ENCODE measurements at regions of chr19 and their contacts with region 1.

Region 1: GRCh38 chr19:41409288-41409687 is 11.7 kb downstream of the BCKDHA start:
- DNase-seq: no peak
- H3K4me3 ChIP-seq: no peak overlapping the region
- H3K27ac ChIP-seq: peak overlapping the region; percentile 25 to 46
- H3K4me1 ChIP-seq: peaks cover 12 to 43% (median 15%) of the 10 kb centered on the region in 4 experiments
- H3K27me3 ChIP-seq: no peaks in the 10 kb centered on the region

Region 2: DNA sequence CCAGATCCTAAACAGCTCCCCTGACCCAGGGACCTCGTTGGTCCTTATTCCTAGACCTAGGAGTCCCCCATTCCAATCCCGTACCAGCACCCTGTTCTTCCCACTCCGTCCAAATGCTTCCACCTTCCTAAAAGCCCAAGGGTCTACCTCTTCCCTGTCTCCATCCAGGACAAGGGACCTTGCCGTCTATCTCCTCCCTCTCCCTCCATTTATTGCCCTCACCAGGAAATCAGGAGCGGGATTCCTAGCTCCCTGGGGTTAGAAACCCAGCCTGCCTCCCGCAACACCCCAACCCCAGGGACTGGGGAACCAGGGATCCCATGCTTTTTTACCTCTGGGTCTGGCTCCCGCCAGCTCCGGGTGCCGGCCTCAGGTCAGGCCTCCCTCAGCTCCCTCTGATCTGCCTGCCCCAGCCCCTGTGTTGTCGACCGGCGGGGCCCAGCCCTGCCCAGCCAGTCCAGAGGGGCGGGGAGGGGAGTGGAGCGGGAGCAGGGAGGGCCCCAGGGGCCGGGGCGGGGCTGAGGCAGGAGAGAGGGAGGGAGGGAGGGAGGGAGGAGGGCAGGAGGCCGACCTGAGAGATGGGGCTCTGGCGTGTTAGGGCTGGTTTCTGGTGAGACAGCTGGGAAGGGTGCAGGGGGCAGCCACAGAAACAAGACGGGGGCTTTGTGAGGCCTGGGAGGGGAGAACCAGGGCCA is 17.8 kb after region 1 on chr19 and contains the start of gene B3GNT8:
- CTCF ChIA-PET with region 1: interaction called, 23 read pairs
- POLR2A ChIA-PET with region 1: no interaction called
- DNase-seq: peak; percentile 71 to 86 (median 82)
- H3K4me3 ChIP-seq: peak within 1 kb of the TSS; percentile 31 to 90 (median 70)
- H3K27ac ChIP-seq: peak within 1 kb of the TSS; percentile 66 to 86
- H3K4me1 ChIP-seq: peaks cover 4 to 68% (median 64%) of the 10 kb centered on the region in 4 experiments
- H3K27me3 ChIP-seq: no peaks in the 10 kb centered on the region

Region 3: GRCh38 chr19:41439441-41440222 is 30.3 kb after region 1 on chr19 and contains the start of gene DMAC2:
- CTCF ChIA-PET with region 1: interaction called, 10 read pairs
- POLR2A ChIA-PET with region 1: no interaction called
- DNase-seq: peak; percentile 97 to 98 (median 97)
- H3K4me3 ChIP-seq: peak within 1 kb of the TSS; percentile 71 to 100 (median 93)
- H3K27ac ChIP-seq: peak within 1 kb of the TSS; percentile 80 to 88
- H3K4me1 ChIP-seq: peaks cover 4 to 22% (median 13%) of the 10 kb centered on the region in 4 experiments
- H3K27me3 ChIP-seq: no peaks in the 10 kb centered on the region

Region 4: GRCh38 chr19:41505105-41505504 is 95.8 kb after region 1 on chr19:
- CTCF ChIA-PET with region 1: no interaction called
- POLR2A ChIA-PET with region 1: no interaction called
- DNase-seq: no peak
- H3K4me3 ChIP-seq: no peak overlapping the region
- H3K27ac ChIP-seq: no peak overlapping the region
- H3K4me1 ChIP-seq: peaks cover 0 to 4% (median 1%) of the 10 kb centered on the region in 4 experiments
- H3K27me3 ChIP-seq: peaks cover 2 to 15% (median 5%) of the 10 kb centered on the region in 5 experiments

Measured in common myeloid progenitor, CD34-positive (primary cell).